ENCODE measurements at regions of chr15 and their contacts with region 1.

Region 1: DNA sequence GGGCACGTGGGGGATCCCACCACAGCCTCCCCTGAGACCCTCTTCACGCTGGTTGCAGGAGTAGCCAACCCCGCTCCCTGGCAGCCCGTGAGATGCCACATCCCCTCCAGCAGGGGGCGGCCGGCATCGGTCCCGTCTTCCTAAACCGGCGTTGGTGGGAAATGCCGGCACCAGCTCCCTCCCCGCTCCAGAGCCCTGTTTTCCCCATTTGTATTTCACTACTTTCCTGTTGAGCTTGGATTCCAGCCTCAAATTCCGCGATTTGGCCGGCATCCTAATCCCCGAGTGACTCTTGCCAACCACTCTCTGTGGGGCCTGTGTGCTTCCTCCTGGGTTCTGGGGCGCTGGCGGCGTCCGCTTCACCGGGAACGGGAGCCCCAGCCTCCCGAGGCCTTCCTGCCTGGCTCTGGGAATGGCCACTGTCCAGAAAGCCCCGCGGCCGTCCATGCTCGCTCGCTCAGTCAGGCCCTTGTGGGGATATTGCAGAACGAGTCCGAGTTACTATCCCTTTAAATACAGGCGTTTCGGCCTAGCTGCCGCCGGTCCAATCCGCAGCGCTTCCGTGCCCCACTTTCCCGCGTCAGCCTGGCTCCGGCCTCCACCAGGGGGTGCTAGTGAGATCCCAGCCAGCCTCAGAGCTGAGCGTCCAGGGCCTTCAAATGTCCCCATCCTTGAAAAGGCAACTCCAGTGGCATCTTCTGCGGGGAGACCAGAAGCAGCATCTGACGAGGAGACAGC is 8.1 kb upstream of the ADAMTS17 start:
- DNase-seq: peak; percentile 93
- H3K4me3 Mint-ChIP-seq: peak overlapping the region; percentile 80
- H3K27ac Mint-ChIP-seq: peak overlapping the region; percentile 71
- H3K4me1 Mint-ChIP-seq: peaks cover 2% of the 10 kb centered on the region
- H3K27me3 Mint-ChIP-seq: peaks cover 8% of the 10 kb centered on the region

Region 2: GRCh38 chr15:100083572-100083971 is 266.3 kb before region 1 on chr15:
- CTCF ChIA-PET with region 1: no interaction called
- intact Hi-C with region 1: no loop called
- DNase-seq: no peak
- H3K4me3 Mint-ChIP-seq: no peak overlapping the region
- H3K27ac Mint-ChIP-seq: no peak overlapping the region
- H3K4me1 Mint-ChIP-seq: no peaks in the 10 kb centered on the region
- H3K27me3 Mint-ChIP-seq: no peaks in the 10 kb centered on the region

Region 3: GRCh38 chr15:100170291-100171210 is 179.3 kb before region 1 on chr15:
- CTCF ChIA-PET with region 1: no interaction called
- intact Hi-C with region 1: no loop called
- DNase-seq: peak; percentile 40
- H3K4me3 Mint-ChIP-seq: no peak overlapping the region
- H3K27ac Mint-ChIP-seq: peak overlapping the region; percentile 60
- H3K4me1 Mint-ChIP-seq: peaks cover 6% of the 10 kb centered on the region
- H3K27me3 Mint-ChIP-seq: no peaks in the 10 kb centered on the region

Region 4: GRCh38 chr15:100264994-100265673 is 84.7 kb before region 1 on chr15:
- CTCF ChIA-PET with region 1: no interaction called
- intact Hi-C with region 1: no loop called
- DNase-seq: no peak
- H3K4me3 Mint-ChIP-seq: no peak overlapping the region
- H3K27ac Mint-ChIP-seq: no peak overlapping the region
- H3K4me1 Mint-ChIP-seq: no peaks in the 10 kb centered on the region
- H3K27me3 Mint-ChIP-seq: no peaks in the 10 kb centered on the region

Region 5: DNA sequence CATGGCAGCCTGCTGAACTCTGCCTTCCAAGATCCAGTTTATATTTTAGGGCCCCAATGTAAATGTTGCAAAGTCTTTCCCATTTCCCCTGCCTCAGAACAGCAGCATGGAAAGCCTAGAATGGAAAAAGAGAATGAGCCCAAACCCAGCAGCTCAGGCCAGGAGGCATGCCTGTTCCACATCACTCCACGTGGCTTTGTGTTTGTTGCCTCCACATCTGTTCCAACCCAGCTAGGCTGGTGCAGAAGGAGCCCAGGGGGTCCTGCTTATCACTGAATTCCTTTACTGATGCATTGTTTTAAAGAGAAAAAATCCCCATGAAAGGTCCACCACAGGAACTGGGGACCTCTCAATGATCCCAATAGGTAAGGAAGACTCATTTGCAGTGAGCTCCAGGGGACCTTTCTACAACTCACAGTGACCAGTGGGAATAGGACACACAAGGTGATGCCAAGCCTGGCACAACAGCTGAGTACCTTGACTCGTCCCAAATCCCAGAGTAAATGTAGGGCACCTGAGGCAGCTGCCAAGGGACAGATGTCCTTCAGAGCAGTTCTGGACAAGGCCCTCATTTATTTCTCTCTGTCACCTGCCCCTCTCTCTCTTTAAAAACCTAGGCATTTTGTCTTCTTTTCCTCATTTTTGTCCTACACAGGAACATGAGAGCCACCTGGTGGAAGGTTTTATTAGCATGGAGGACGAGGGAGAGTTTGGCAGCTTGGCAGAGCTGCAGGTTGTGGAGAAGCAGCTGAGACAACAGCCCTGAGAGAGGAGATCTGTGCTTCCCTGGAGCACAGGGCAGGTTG is 33.6 kb after region 1 on chr15:
- CTCF ChIA-PET with region 1: interaction called, 51 read pairs
- intact Hi-C with region 1: loop called (anchors 1 kb)
- DNase-seq: peak; percentile 49
- H3K4me3 Mint-ChIP-seq: no peak overlapping the region
- H3K27ac Mint-ChIP-seq: no peak overlapping the region
- H3K4me1 Mint-ChIP-seq: no peaks in the 10 kb centered on the region
- H3K27me3 Mint-ChIP-seq: no peaks in the 10 kb centered on the region

Region 6: DNA sequence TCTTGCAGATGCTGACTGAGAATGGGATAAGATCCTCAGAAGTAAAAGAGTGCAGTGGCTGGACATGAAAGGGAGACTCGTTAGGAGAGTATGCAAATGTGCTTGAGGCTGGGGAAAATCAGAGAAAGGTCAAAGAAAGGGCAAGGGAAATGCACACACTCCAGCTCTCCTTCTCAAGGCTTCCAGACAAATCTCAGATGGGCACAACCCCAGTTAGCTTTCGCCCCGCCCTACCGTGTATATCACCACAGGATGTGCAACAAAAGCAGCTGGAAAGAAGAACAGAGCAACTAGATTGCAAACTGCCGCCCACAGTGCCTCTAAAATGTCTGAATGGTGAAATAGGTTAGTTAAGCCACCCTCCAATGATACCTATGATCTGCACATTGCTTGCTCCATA is 115.0 kb after region 1 on chr15:
- CTCF ChIA-PET with region 1: no interaction called
- intact Hi-C with region 1: no loop called
- DNase-seq: peak; percentile 13
- H3K4me3 Mint-ChIP-seq: no peak overlapping the region
- H3K27ac Mint-ChIP-seq: no peak overlapping the region
- H3K4me1 Mint-ChIP-seq: peaks cover 21% of the 10 kb centered on the region
- H3K27me3 Mint-ChIP-seq: no peaks in the 10 kb centered on the region

Region 7: GRCh38 chr15:100520132-100520921 is 170.5 kb after region 1 on chr15:
- CTCF ChIA-PET with region 1: interaction called, 14 read pairs
- intact Hi-C with region 1: loop called (anchors 5 kb)
- DNase-seq: no peak
- H3K4me3 Mint-ChIP-seq: no peak overlapping the region
- H3K27ac Mint-ChIP-seq: peak overlapping the region; percentile 23
- H3K4me1 Mint-ChIP-seq: peaks cover 22% of the 10 kb centered on the region
- H3K27me3 Mint-ChIP-seq: no peaks in the 10 kb centered on the region

Region 8: DNA sequence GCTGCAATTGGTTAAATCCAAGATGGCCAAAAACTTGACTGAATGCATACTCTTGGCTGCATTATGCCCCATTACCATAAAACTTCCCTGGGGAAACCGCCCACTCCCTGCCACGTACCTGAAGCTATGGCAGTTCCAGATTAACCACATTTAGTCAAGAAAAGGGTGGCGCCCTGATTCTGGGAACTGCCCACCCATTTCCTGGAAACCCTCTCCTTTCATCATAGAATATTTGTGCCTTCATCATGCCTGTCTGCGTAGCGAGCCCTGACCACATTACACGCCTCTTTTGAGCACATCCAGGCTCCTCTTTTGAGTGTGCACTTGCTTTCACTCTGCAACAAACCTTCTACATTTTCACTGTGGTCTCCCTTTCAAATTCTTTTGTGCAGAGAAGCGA is 246.9 kb after region 1 on chr15:
- CTCF ChIA-PET with region 1: interaction called, 13 read pairs
- intact Hi-C with region 1: no loop called
- DNase-seq: peak; percentile 99
- H3K4me3 Mint-ChIP-seq: peak overlapping the region; percentile 70
- H3K27ac Mint-ChIP-seq: no peak overlapping the region
- H3K4me1 Mint-ChIP-seq: peaks cover 65% of the 10 kb centered on the region
- H3K27me3 Mint-ChIP-seq: no peaks in the 10 kb centered on the region

Region 9: GRCh38 chr15:100633763-100634075 is 283.9 kb after region 1 on chr15:
- CTCF ChIA-PET with region 1: interaction called, 10 read pairs
- intact Hi-C with region 1: loop called (anchors 5 kb)
- DNase-seq: no peak
- H3K4me3 Mint-ChIP-seq: no peak overlapping the region
- H3K27ac Mint-ChIP-seq: no peak overlapping the region
- H3K4me1 Mint-ChIP-seq: peaks cover 51% of the 10 kb centered on the region
- H3K27me3 Mint-ChIP-seq: no peaks in the 10 kb centered on the region

Region 10: GRCh38 chr15:100918034-100918689 is 568.3 kb after region 1 on chr15:
- CTCF ChIA-PET with region 1: no interaction called
- intact Hi-C with region 1: loop called (anchors 2 kb)
- DNase-seq: peak; percentile 73
- H3K4me3 Mint-ChIP-seq: peak overlapping the region; percentile 74
- H3K27ac Mint-ChIP-seq: no peak overlapping the region
- H3K4me1 Mint-ChIP-seq: peaks cover 19% of the 10 kb centered on the region
- H3K27me3 Mint-ChIP-seq: peaks cover 64% of the 10 kb centered on the region

Measured in activated naive CD4-positive, alpha-beta T cell treated with anti-CD3 and anti-CD28 coated beads for 36 hours (primary cell).